Activated naive CD4-positive, alpha-beta T cell treated with anti-CD3 and anti-CD28 coated beads for 36 hours (primary cell): ENCODE measurements at regions of chr19 and their contacts with region 1.

Region 1: DNA sequence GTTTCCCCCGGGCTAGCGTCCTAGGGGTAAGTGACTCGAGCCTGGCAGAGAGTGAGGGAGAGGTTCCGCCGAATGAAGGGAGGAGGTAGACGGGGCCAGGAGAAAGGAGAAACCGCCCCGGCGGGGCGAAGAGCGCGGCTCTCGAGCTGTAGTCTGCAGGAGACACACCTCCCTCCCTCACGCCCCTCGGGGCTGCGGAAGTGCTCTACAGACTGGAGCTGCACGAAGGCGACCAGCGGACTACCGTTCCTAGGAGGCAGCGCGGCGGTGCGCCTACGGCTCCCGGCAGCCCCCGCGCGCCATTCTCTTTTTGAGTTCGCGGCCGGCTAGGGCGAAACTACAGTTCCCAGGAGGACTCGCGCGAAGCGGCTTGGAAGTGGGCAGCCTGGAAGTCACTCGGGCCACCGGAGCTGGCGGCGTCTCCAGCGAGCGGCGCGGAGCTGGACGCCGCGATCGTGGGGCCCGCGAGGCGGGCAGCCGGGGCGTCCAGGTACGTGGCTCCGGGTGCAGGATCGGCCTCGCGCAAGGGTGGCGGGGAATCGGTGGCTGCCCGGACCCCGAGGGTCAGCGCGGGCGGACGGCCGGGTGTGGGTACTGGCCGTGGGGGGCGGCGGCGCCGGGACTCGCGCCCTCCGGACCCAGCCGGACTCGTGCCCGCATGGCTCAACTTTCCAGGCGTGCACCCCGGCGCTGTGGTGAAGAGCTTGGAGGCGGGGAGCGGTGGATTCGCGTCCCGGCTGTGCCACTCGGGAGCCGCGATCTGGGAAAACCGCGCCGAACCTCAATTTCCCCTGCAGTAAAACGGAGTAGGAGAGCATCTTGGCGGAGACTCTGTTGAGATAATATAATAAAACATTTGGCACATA is at the start of gene SIPA1L3:
- DNase-seq: peak; percentile 95
- H3K4me3 Mint-ChIP-seq: peak within 1 kb of the TSS; percentile 77
- H3K27ac Mint-ChIP-seq: peak within 1 kb of the TSS; percentile 59
- H3K4me1 Mint-ChIP-seq: peaks cover 20% of the 10 kb centered on the region
- H3K27me3 Mint-ChIP-seq: no peaks in the 10 kb centered on the region
- total RNA-seq, gene SIPA1L3: 8.1 to 10.4 TPM

Region 2: DNA sequence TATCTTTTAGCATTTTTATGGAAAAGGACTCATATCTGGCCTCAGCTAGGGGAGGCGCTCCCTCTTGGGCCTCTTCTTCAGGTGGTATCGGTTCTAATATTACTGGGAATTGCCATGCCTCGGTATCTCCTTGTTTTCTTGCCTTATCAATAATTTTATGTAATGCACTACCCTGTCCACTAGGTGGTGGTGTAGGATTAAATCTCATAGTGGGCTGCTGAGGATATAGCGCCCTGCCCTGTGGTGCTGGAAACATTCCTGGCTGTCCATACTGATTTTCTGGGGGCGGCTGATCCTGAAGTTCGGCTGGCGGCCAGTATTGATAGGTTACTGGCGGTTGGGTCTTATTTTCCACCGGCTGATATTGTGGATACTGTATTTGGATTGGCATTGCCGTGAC is 793.1 kb before region 1 on chr19:
- CTCF ChIA-PET with region 1: no interaction called
- intact Hi-C with region 1: no loop called
- DNase-seq: no peak
- H3K4me3 Mint-ChIP-seq: no peak overlapping the region
- H3K27ac Mint-ChIP-seq: no peak overlapping the region
- H3K4me1 Mint-ChIP-seq: no peaks in the 10 kb centered on the region
- H3K27me3 Mint-ChIP-seq: no peaks in the 10 kb centered on the region

Region 3: DNA sequence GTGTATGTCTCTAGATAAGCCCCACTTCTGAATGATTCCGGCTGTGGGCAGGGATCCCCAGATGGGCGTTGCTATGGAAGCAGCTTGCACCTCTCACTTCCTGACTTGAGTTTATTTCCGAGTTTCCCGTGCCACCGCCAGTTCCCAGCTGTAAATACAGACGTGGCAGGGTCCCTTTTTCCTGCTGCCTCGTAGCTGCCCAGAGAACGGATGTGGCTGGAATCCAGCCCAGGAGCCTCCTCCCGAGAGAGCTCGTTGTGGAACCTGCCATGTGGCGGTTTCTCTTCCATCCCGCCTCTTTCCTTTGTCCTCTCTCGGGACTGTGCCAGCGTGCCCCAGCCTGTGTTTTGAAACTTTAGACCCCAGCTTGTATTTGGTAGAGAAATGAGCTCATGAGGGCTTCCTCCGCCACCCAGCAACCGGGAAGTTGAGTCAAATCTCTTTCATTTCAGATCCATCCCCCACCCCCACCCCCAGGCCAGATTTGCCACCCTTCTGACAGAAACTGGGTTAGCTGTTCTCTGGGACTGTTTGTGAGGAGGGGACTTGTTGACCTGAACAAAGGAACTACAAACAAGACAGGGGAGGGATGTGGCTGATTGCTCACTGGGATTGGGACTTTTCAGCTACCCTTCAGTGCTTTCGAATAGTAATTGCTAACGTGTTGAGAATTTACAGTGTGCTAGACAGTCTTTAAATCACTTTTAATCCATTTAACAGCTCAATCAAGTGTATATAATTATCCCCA is 96.5 kb after region 1 on chr19:
- CTCF ChIA-PET with region 1: interaction called, 3 read pairs
- intact Hi-C with region 1: loop called (anchors 2 kb)
- DNase-seq: peak; percentile 75
- H3K4me3 Mint-ChIP-seq: no peak overlapping the region
- H3K27ac Mint-ChIP-seq: no peak overlapping the region
- H3K4me1 Mint-ChIP-seq: peaks cover 14% of the 10 kb centered on the region
- H3K27me3 Mint-ChIP-seq: no peaks in the 10 kb centered on the region

Region 4: GRCh38 chr19:38079926-38080380 is 172.9 kb after region 1 on chr19:
- CTCF ChIA-PET with region 1: interaction called, 4 read pairs
- intact Hi-C with region 1: loop called (anchors 2 kb)
- DNase-seq: peak; percentile 13
- H3K4me3 Mint-ChIP-seq: no peak overlapping the region
- H3K27ac Mint-ChIP-seq: peak overlapping the region; percentile 83
- H3K4me1 Mint-ChIP-seq: peaks cover 21% of the 10 kb centered on the region
- H3K27me3 Mint-ChIP-seq: no peaks in the 10 kb centered on the region

Region 5: GRCh38 chr19:38142176-38143035 is 235.3 kb after region 1 on chr19:
- CTCF ChIA-PET with region 1: interaction called, 9 read pairs
- intact Hi-C with region 1: loop called (anchors 5 kb)
- DNase-seq: peak; percentile 67
- H3K4me3 Mint-ChIP-seq: no peak overlapping the region
- H3K27ac Mint-ChIP-seq: no peak overlapping the region
- H3K4me1 Mint-ChIP-seq: no peaks in the 10 kb centered on the region
- H3K27me3 Mint-ChIP-seq: no peaks in the 10 kb centered on the region

Region 6: GRCh38 chr19:38315657-38316476 is 408.8 kb after region 1 on chr19 and contains the start of gene YIF1B:
- CTCF ChIA-PET with region 1: interaction called, 3 read pairs
- intact Hi-C with region 1: loop called (anchors 5 kb)
- DNase-seq: peak; percentile 98
- H3K4me3 Mint-ChIP-seq: peak within 1 kb of the TSS; percentile 89
- H3K27ac Mint-ChIP-seq: peak within 1 kb of the TSS; percentile 92
- H3K4me1 Mint-ChIP-seq: peaks cover 50% of the 10 kb centered on the region
- H3K27me3 Mint-ChIP-seq: no peaks in the 10 kb centered on the region
- total RNA-seq, gene YIF1B: 56.0 to 61.1 TPM